Activated CD4-positive, alpha-beta memory T cell treated with anti-CD3 and anti-CD28 coated beads for 36 hours (primary cell): ENCODE measurements at regions of chr6 and their contacts with region 1.

Region 1: GRCh38 chr6:99330159-99330558 is 19.3 kb downstream of the FAXC start:
- DNase-seq: peak; percentile 73
- H3K4me3 Mint-ChIP-seq: no peak overlapping the region
- H3K27ac Mint-ChIP-seq: no peak overlapping the region
- H3K4me1 Mint-ChIP-seq: peaks cover 3% of the 10 kb centered on the region
- H3K27me3 Mint-ChIP-seq: peaks cover 5% of the 10 kb centered on the region

Region 2: DNA sequence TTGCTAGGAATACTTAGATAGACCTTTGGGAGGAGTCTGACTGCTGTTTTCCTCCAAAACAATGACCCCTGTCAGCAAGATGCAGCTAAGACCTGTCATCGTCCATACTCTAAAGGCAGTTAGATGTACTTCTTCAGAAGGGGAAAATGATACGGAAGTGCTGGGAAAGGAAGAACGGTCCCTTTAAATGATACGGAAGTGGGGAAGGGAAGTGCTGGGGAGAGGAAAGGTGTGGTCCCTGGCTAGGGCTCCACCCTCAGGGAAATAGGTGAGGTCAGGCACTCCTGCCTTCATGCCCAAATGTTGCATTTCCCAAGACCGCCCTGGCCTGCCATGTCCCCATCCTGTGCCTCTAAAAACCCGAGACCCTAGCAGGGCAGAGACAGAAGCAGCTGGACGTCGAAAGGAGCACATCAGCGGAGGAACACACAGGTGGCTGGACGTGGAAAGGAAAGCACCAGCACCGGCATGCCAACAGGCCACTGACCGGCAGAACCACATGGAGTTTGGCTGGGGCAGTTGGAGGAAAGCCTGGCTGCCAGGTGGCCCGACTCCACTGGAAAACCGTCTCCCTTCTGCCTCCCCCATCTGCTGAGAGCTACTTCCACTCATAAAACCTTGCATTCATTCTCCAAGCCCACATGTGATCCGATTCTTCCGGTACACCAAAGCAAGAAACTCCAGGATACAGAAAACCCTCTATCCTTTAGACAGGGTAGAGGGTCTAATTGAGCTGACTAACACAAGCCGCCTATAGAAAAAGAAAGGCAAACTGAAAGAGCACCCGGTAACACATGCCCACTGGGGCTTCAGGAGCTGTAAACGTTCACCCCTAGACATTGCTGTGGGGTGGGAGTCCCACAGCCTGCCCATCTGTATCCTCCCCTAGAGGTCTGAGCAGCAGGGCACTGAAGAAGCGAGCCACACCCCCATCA is 75.3 kb before region 1 on chr6:
- CTCF ChIA-PET with region 1: no interaction called
- POLR2A ChIA-PET with region 1: no interaction called
- intact Hi-C with region 1: no loop called
- DNase-seq: no peak
- H3K4me3 Mint-ChIP-seq: no peak overlapping the region
- H3K27ac Mint-ChIP-seq: no peak overlapping the region
- H3K4me1 Mint-ChIP-seq: no peaks in the 10 kb centered on the region
- H3K27me3 Mint-ChIP-seq: peaks cover 4% of the 10 kb centered on the region

Region 3: GRCh38 chr6:99393698-99394531 is 63.8 kb after region 1 on chr6 and contains the start of gene COQ3:
- CTCF ChIA-PET with region 1: interaction called, 19 read pairs
- POLR2A ChIA-PET with region 1: interaction called, 3 read pairs
- intact Hi-C with region 1: loop called (anchors 1 kb)
- DNase-seq: peak; percentile 75
- H3K4me3 Mint-ChIP-seq: peak within 1 kb of the TSS; percentile 94
- H3K27ac Mint-ChIP-seq: peak within 1 kb of the TSS; percentile 86
- H3K4me1 Mint-ChIP-seq: peaks cover 5% of the 10 kb centered on the region
- H3K27me3 Mint-ChIP-seq: no peaks in the 10 kb centered on the region
- total RNA-seq, gene COQ3: 14.9 to 16.4 TPM

Region 4: DNA sequence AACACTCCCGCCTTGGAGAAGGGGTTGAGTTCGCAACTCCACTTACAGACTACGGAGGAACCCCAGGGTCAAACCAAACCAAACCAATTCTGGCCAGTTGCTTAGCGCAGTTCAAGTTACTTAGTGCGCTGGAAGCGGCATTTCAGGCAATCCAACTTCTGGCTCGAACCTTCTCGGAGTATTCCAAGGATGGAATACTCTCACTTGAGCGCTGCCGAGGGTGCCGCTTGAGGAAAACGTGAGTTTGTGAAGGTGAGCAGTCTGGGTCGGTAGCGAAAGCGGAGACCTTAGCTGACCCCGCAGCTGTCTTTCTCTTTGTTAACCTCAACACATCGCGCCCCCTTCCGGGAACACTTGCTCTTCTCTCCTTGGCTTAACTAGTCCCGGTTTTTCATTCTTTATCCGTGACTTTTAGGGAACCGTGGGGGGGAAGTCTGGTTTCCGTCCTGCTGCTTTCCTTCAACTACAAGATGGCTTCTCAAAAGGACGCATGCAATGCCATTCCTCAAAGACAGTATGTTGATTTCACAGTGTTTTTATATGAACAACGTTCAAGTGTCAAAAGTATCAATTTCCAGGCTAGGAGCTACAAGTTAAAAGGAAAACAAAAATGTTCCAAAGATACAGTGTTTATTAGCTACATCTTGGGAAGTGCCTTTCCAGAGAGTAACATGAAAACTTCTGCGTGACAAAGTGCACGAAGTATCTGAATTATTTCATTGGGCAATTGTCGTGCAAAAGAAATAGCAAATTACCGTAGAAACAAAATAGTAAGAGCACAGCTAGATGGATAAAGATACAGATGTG is 95.7 kb after region 1 on chr6:
- CTCF ChIA-PET with region 1: interaction called, 31 read pairs
- POLR2A ChIA-PET with region 1: interaction called, 3 read pairs
- intact Hi-C with region 1: loop called (anchors 1 kb)
- DNase-seq: peak; percentile 76
- H3K4me3 Mint-ChIP-seq: peak overlapping the region; percentile 82
- H3K27ac Mint-ChIP-seq: peak overlapping the region; percentile 98
- H3K4me1 Mint-ChIP-seq: peaks cover 56% of the 10 kb centered on the region
- H3K27me3 Mint-ChIP-seq: no peaks in the 10 kb centered on the region

Region 5: DNA sequence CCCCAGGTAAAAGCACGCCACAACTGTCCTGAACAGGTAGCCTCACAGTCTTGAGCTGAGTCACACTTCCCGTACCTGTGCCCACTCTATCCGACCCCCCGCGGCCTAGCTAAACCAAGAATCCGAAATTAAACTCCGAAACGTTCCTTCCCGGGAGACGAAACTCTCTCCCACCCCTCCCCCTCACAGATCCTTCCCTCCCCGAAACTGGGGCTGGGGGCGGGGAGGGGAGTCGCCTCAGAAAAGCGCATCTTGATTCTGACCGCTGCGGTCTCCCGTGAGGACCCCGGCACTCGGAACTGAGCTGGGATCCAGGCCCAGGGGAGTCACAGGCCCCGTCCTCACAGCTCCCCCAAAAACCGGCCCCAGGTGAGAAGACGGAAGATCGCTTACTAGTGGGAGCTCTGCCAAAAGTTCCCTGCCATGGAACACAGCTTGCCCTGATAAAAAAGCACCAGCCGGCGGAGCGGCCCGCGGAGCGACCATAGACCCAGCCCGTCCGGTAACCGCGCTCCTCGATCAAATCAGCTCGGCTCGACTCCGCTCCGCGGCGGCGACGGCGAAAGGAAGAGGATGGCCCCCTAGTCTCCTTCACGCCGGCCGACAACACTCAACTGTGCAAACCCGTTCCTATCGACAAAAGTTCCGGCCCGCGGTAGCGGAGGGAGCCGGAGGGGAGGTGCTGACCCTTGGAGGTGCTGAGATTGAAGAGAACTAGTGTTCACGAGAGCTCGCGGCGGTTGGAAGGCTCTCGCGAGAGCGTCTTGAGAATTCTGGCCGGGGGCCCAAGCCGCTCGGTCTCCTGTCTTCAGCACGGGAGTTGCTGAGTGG is 238.2 kb after region 1 on chr6 and contains the start of gene CCNC:
- CTCF ChIA-PET with region 1: no interaction called
- POLR2A ChIA-PET with region 1: no interaction called
- intact Hi-C with region 1: loop called (anchors 10 kb)
- DNase-seq: peak; percentile 94
- H3K4me3 Mint-ChIP-seq: peak within 1 kb of the TSS; percentile 97
- H3K27ac Mint-ChIP-seq: peak within 1 kb of the TSS; percentile 94
- H3K4me1 Mint-ChIP-seq: peaks cover 25% of the 10 kb centered on the region
- H3K27me3 Mint-ChIP-seq: no peaks in the 10 kb centered on the region
- total RNA-seq, gene CCNC: 59.9 to 64.0 TPM

Region 6: DNA sequence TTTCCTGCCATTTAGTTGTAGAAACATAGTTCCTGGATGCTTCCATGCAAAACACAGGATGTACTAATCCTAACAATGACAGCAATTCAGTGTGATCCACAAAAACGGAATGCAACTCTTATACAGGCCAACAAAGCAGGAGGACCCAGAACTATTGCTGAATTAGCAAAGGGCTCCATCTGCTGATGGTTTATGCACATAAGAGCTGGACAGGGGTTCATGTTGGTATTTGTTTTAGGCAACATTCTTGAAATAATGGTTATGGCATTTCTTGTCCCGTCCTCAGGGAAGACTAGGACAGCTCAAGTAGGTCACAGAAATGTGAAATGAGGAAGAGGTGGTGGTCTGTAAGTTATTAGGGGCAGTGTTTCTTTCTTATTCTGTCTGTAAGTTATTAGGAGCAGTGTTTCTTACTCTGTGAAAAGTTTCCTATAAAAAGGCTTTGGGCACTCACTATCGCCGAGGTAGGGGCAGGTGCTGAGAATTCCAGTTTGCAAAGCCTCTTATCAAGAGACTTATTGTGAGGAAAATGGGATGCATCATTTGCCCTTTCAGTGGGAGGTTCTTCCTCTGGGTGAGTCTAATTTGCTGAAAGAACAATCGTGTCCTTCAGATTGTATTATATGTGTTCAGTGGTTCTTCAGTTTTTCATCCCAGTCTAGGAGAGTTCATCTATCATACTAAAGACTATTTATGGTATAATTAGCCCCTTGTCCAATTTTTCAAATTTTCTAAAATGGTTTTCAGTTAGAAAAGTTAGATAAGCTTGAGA is 492.8 kb after region 1 on chr6:
- CTCF ChIA-PET with region 1: no interaction called
- POLR2A ChIA-PET with region 1: no interaction called
- intact Hi-C with region 1: loop called (anchors 5 kb)
- DNase-seq: no peak
- H3K4me3 Mint-ChIP-seq: no peak overlapping the region
- H3K27ac Mint-ChIP-seq: no peak overlapping the region
- H3K4me1 Mint-ChIP-seq: no peaks in the 10 kb centered on the region
- H3K27me3 Mint-ChIP-seq: peaks cover 24% of the 10 kb centered on the region